Naive thymus-derived CD4-positive, alpha-beta T cell (primary cell): ENCODE measurements at regions of chr1 and their contacts with region 1.

Region 1: GRCh38 chr1:159009704-159010361 is at the start of gene IFI16:
- DNase-seq: peak in 8 of 9 donors; percentile 56 to 80 (median 71)
- ATAC-seq: peak; percentile 84
- H3K4me3 ChIP-seq: peak within 1 kb of the TSS; percentile 86
- H3K4me3 Mint-ChIP-seq: peak within 1 kb of the TSS; percentile 85 to 98 (median 92)
- H3K27ac ChIP-seq: peak within 1 kb of the TSS; percentile 87
- H3K27ac Mint-ChIP-seq: peak within 1 kb of the TSS; percentile 92 to 99 (median 96)
- H3K4me1 ChIP-seq: peaks cover 28% of the 10 kb centered on the region in 2 donors
- H3K4me1 Mint-ChIP-seq: peaks cover 37 to 64% (median 54%) of the 10 kb centered on the region in 7 donors
- H3K27me3 ChIP-seq: no peaks in the 10 kb centered on the region
- H3K27me3 Mint-ChIP-seq: no peaks in the 10 kb centered on the region
- total RNA-seq, gene IFI16: 42.4 to 307 (median 96.0) TPM

Region 2: DNA sequence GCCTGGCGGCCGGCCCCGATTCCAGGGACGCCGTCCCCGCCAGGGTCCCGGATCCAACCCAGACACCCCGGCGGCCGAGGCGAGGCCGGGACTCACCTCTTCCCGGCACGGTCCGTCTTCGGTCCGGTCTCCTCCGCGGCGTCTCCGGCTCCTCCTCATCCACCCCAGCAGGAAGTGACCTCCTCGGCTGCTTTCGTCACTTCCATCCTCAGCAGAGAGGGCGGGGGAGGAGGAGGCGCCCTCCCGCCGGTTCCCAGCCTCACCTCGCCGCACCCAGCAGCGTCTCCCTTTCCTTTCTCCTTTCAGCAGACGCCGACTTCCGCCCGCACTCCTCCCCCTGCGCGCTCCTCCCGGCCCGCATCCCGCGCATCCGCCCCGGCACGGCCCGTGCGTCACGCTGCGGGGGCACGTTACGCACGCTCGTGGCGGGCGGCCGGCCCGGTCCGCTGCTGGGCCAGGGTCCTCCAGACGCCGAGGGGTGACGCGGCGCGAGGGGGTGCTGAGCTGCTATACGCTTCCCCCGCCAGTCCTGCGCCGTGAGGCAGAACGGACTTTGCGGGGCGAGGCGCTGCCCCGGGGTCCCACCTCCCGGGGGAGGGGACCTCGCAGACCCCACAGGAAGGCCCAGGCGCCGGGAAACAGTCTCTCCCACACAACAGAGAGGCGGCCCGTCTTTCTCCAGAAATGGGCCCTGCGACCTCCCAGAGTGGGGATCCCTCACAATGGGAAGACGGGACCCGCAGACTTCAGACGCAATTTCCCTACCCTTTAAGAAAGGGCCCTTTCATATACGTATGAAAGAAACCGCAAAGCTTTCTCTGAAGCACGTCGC is 1871.4 kb before region 1 on chr1 and contains the start of gene ETV3:
- CTCF ChIA-PET with region 1: no interaction called
- POLR2A ChIA-PET with region 1: no interaction called
- intact Hi-C with region 1: loop called in 1 of 2 experiments (anchors 5 kb)
- DNase-seq: peak; percentile 65 to 90 (median 87)
- ATAC-seq: peak; percentile 87
- H3K4me3 ChIP-seq: peak within 1 kb of the TSS; percentile 84
- H3K4me3 Mint-ChIP-seq: peak within 1 kb of the TSS; percentile 90 to 97 (median 95)
- H3K27ac ChIP-seq: peak within 1 kb of the TSS; percentile 96
- H3K27ac Mint-ChIP-seq: peak within 1 kb of the TSS; percentile 83 to 98 (median 95)
- H3K4me1 ChIP-seq: peaks cover 43 to 48% of the 10 kb centered on the region in 2 donors
- H3K4me1 Mint-ChIP-seq: peaks cover 41 to 65% (median 57%) of the 10 kb centered on the region in 7 donors
- H3K27me3 ChIP-seq: no peaks in the 10 kb centered on the region
- H3K27me3 Mint-ChIP-seq: no peaks in the 10 kb centered on the region
- total RNA-seq, gene ETV3: 31.5 to 72.4 (median 53.3) TPM

Region 3: DNA sequence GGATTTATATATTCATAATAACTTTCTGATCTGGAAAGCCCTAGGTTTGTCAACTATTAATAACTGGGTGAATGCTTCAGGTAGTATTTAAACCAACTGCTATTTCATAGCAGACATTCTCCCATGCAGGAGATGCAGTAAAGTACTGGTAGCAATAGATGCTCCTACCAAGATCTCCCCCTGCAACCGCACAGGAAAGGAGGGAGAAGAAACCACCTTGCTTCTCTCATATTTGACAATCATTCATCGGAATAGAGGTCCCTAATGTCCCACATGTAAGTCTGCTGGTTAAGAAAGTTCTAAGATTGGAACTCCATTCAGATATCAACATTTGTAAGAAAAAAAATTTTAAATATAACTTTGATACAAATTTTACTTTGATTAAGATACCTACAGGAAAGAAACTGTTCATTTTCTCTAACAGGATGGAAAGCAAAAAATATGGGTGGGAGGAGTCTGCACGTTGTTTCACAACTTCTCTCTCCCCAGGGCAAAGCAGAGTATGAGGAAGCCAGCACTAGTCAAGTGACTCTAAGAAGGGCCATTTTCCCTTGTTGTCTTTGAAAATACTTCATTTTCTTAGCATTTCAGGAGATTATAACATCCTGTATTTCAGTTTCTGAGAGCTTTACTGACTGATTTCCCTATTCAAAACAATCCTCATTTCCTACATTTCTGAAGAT is 78.6 kb before region 1 on chr1 and contains the start of gene PYHIN1:
- CTCF ChIA-PET with region 1: no interaction called
- POLR2A ChIA-PET with region 1: interaction called, 5 read pairs
- intact Hi-C with region 1: loop called (anchors 1 to 2 kb)
- DNase-seq: peak in 7 of 9 donors; percentile 15 to 42 (median 26)
- ATAC-seq: peak; percentile 86
- H3K4me3 ChIP-seq: peak within 1 kb of the TSS; percentile 66
- H3K4me3 Mint-ChIP-seq: peak within 1 kb of the TSS; percentile 64 to 96 (median 89)
- H3K27ac ChIP-seq: peak within 1 kb of the TSS; percentile 61
- H3K27ac Mint-ChIP-seq: peak within 1 kb of the TSS; percentile 69 to 94 (median 82)
- H3K4me1 ChIP-seq: peaks cover 9 to 34% of the 10 kb centered on the region in 2 donors
- H3K4me1 Mint-ChIP-seq: peaks cover 6 to 47% (median 29%) of the 10 kb centered on the region in 7 donors
- H3K27me3 ChIP-seq: no peaks in the 10 kb centered on the region
- H3K27me3 Mint-ChIP-seq: peaks cover 0 to 6% (median 0%) of the 10 kb centered on the region in 5 donors
- total RNA-seq, gene PYHIN1: 20.3 to 48.2 (median 36.1) TPM

Region 4: GRCh38 chr1:159030877-159031447 is 21.1 kb after region 1 on chr1:
- CTCF ChIA-PET with region 1: interaction called, 4 read pairs
- POLR2A ChIA-PET with region 1: interaction called, 3 read pairs
- intact Hi-C with region 1: loop called (anchors 2 kb)
- DNase-seq: no peak
- ATAC-seq: no peak
- H3K4me3 ChIP-seq: no peak overlapping the region
- H3K4me3 Mint-ChIP-seq: peak overlapping the region in 1 of 10 donors; percentile 76
- H3K27ac ChIP-seq: no peak overlapping the region
- H3K27ac Mint-ChIP-seq: peak overlapping the region in 2 of 9 donors; percentile 40 to 68
- H3K4me1 ChIP-seq: peaks cover 0 to 8% of the 10 kb centered on the region in 2 donors
- H3K4me1 Mint-ChIP-seq: peaks cover 42 to 79% (median 55%) of the 10 kb centered on the region in 7 donors
- H3K27me3 ChIP-seq: no peaks in the 10 kb centered on the region
- H3K27me3 Mint-ChIP-seq: no peaks in the 10 kb centered on the region

Region 5: GRCh38 chr1:159054427-159054826 is 44.6 kb after region 1 on chr1:
- CTCF ChIA-PET with region 1: no interaction called
- POLR2A ChIA-PET with region 1: no interaction called
- intact Hi-C with region 1: loop called (anchors 5 kb)
- DNase-seq: no peak
- ATAC-seq: no peak
- H3K4me3 ChIP-seq: no peak overlapping the region
- H3K4me3 Mint-ChIP-seq: peak overlapping the region in 1 of 10 donors; percentile 6
- H3K27ac ChIP-seq: peak overlapping the region; percentile 9
- H3K27ac Mint-ChIP-seq: peak overlapping the region in 6 of 9 donors; percentile 14 to 82 (median 60)
- H3K4me1 ChIP-seq: peaks cover 0 to 12% of the 10 kb centered on the region in 2 donors
- H3K4me1 Mint-ChIP-seq: peaks cover 15 to 48% (median 28%) of the 10 kb centered on the region in 7 donors
- H3K27me3 ChIP-seq: no peaks in the 10 kb centered on the region
- H3K27me3 Mint-ChIP-seq: no peaks in the 10 kb centered on the region

Region 6: DNA sequence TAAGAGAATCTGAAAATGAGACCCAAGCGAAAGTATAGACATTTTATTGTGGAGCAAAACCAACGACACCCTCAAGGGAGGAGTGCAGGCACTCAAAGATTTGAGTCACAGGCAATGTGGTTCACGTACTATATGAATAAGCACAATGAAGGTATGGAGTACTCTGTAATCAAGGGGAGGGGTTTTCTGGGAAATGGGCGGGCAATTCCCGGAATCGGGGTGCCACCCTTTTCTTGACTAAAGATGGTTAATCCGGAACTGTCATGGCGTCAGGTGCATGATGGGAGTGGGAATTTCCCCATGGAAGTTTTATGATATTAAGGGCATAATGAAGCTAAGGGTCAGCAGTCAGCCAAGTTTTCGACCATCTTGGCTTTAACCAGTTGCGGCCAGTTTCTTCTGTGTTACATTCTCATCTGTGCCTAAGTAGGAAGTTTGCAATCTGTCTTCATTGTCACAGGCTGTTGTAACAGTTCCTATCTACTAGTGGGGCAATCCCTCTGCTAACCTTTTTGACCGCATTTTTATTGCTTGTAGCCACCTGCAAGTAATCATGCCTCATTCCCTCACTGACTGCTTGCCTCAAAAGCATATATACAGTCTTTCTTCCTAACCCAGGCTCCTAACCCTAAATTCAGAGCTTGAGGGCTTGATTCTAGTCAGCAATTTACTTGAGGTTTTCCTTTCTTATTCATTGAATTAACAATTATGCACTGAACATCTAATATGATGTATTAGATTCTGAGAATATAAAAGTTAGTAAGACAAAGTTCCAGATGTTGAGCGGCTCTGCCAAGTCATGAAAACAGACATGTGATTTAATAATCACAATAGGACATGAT is 67.5 kb after region 1 on chr1:
- CTCF ChIA-PET with region 1: no interaction called
- POLR2A ChIA-PET with region 1: no interaction called
- intact Hi-C with region 1: loop called in 1 of 2 experiments (anchors 1 kb)
- DNase-seq: peak in 2 of 9 donors; percentile 37 to 96
- ATAC-seq: peak; percentile 79
- H3K4me3 ChIP-seq: peak overlapping the region; percentile 38
- H3K4me3 Mint-ChIP-seq: peak overlapping the region in 3 of 10 donors; percentile 3 to 90 (median 38)
- H3K27ac ChIP-seq: peak overlapping the region; percentile 18
- H3K27ac Mint-ChIP-seq: peak overlapping the region in 3 of 9 donors; percentile 65 to 99 (median 65)
- H3K4me1 ChIP-seq: peaks cover 0 to 28% of the 10 kb centered on the region in 2 donors
- H3K4me1 Mint-ChIP-seq: peaks cover 0 to 40% (median 4%) of the 10 kb centered on the region in 7 donors
- H3K27me3 ChIP-seq: no peaks in the 10 kb centered on the region
- H3K27me3 Mint-ChIP-seq: peaks cover 0 to 3% (median 1%) of the 10 kb centered on the region in 5 donors